ENCODE measurements at regions of chr3 and their contacts with region 1.

Region 1: DNA sequence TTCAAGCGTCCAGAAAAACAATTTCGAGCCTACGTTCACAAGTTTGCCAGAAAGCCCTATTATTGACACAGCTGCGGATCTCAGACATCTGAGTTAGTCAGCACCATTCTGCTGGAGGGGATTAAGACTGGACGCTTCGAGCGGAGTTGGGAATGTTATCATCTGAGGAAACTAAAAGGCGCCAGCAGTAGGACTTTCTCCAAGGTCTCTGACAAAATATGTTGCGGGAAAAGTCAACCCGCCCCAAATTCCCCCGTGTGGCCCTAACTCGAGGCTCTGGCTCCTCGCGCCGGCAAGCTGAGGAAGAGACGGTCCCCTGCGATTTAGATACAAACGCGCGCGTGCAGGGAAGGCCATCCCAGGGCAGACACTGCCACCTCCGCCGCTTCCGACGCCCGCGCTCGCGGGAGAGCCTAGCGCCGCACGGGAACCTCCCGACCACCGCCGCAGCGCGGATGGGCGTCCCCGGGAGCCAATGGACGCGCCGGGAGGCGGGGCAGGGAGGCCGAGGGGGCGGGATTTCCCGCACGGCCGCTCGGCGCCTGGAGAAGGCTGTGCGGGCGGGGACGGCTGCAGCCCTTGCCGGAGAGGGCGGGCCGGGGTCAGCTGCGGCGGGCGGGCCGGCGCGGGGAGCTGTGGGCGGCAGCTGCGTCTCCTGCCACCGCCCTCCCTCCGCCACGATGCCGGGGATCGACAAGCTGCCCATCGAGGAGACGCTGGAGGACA is at the start of gene APPL1:
- DNase-seq: peak; percentile 74 to 95
- H3K4me3 ChIP-seq: peak within 1 kb of the TSS; percentile 72 to 97
- H3K27ac ChIP-seq: peak within 1 kb of the TSS; percentile 76 to 96
- H3K4me1 ChIP-seq: peaks cover 3 to 14% of the 10 kb centered on the region in 2 donors
- H3K27me3 ChIP-seq: no peaks in the 10 kb centered on the region
- CTCF ChIP-seq: no peak
- total RNA-seq, gene APPL1: 63.1 TPM

Region 2: DNA sequence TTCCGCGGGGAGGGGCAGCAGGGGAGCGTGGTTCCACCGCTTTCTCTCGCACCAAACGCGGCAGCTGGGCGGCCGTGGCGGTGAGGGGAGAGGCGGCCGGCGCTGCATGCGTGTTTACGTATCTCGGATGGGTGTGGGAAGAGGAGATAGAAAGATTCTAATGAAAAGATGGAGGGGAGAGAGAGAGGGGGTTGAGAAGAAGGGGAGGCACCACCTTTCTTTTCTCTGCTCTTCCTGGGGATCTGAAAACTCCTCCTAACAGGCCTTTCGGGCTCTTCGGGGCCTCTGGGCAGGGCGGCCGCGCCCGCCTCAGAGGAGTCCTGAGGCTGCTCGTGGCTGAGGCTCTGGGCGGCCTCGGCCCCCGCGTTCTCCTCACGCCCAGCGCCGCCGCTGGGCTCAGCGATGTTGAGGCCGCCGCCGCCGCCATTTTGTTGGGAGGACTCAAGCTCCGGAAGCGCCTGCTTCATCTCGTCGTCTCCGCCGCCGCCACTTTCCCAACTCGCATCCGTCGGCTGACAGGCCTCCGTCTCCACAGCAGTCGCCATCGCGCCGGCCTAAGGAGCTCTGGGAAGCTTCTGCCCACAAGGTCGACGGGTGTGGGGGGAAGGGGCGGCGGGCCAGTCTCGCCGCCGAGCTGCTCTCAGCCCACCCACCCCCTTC is 544.8 kb before region 1 on chr3:
- intact Hi-C with region 1: loop called (anchors 5 kb)
- DNase-seq: peak in 1 of 2 donors; percentile 82
- H3K4me3 ChIP-seq: peak overlapping the region; percentile 74 to 82
- H3K27ac ChIP-seq: peak overlapping the region; percentile 95 to 99
- H3K4me1 ChIP-seq: peaks cover 0 to 3% of the 10 kb centered on the region in 2 donors
- H3K27me3 ChIP-seq: no peaks in the 10 kb centered on the region
- CTCF ChIP-seq: no peak

Region 3: DNA sequence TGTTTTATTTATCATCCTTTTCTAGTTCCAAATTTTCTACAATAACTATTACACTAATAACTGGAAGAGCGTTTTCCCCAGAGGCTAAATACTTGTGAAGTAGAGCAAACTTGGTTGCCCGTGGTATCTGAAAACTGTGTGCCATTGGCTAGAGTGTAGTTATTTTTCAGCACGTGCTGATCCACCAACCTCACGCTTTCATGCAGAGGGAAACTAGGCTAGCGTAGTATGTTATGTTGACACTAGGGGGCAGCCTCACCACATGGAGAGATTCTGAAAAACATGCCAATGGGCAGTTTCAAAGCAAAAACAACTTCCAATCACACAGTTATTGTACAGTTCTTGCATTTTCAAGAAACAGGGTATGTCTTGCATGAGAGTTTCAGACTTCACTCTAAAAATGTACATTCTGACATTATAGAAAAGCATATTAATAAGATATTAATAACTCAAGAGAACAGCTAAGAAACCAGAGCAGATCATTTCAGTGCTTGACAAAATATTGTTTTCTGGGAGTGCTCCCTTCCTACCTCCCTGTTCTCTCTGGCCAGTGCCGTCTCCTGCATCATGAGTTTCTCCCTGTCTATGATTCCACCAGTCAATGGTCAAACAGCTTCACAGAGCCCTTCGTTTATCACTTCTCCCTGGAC is 127.2 kb before region 1 on chr3:
- intact Hi-C with region 1: loop called (anchors 5 kb)
- DNase-seq: peak in 1 of 2 donors; percentile 84
- H3K4me3 ChIP-seq: no peak overlapping the region
- H3K27ac ChIP-seq: no peak overlapping the region
- H3K4me1 ChIP-seq: no peaks in the 10 kb centered on the region
- H3K27me3 ChIP-seq: no peaks in the 10 kb centered on the region
- CTCF ChIP-seq: peak; percentile 68 to 91 (median 83)

Region 4: GRCh38 chr3:57199895-57200297 is 27.5 kb before region 1 on chr3 and contains the start of gene HESX1:
- intact Hi-C with region 1: no loop called
- DNase-seq: no peak
- H3K4me3 ChIP-seq: no peak within 1 kb of the TSS
- H3K27ac ChIP-seq: no peak within 1 kb of the TSS
- H3K4me1 ChIP-seq: no peaks in the 10 kb centered on the region
- H3K27me3 ChIP-seq: no peaks in the 10 kb centered on the region
- CTCF ChIP-seq: no peak
- total RNA-seq, gene HESX1: not detected

Region 5: GRCh38 chr3:57252404-57252803 is 25.0 kb after region 1 on chr3:
- intact Hi-C with region 1: no loop called
- DNase-seq: no peak
- H3K4me3 ChIP-seq: no peak overlapping the region
- H3K27ac ChIP-seq: no peak overlapping the region
- H3K4me1 ChIP-seq: no peaks in the 10 kb centered on the region
- H3K27me3 ChIP-seq: no peaks in the 10 kb centered on the region
- CTCF ChIP-seq: no peak

Region 6: GRCh38 chr3:57555738-57556458 is 328.5 kb after region 1 on chr3 and contains the start of gene PDE12:
- intact Hi-C with region 1: loop called (anchors 2 kb)
- DNase-seq: peak; percentile 49 to 95
- H3K4me3 ChIP-seq: peak within 1 kb of the TSS; percentile 90
- H3K27ac ChIP-seq: peak within 1 kb of the TSS; percentile 88 to 90
- H3K4me1 ChIP-seq: peaks cover 3 to 18% of the 10 kb centered on the region in 2 donors
- H3K27me3 ChIP-seq: no peaks in the 10 kb centered on the region
- CTCF ChIP-seq: no peak
- total RNA-seq, gene PDE12: 3.0 TPM

Region 7: DNA sequence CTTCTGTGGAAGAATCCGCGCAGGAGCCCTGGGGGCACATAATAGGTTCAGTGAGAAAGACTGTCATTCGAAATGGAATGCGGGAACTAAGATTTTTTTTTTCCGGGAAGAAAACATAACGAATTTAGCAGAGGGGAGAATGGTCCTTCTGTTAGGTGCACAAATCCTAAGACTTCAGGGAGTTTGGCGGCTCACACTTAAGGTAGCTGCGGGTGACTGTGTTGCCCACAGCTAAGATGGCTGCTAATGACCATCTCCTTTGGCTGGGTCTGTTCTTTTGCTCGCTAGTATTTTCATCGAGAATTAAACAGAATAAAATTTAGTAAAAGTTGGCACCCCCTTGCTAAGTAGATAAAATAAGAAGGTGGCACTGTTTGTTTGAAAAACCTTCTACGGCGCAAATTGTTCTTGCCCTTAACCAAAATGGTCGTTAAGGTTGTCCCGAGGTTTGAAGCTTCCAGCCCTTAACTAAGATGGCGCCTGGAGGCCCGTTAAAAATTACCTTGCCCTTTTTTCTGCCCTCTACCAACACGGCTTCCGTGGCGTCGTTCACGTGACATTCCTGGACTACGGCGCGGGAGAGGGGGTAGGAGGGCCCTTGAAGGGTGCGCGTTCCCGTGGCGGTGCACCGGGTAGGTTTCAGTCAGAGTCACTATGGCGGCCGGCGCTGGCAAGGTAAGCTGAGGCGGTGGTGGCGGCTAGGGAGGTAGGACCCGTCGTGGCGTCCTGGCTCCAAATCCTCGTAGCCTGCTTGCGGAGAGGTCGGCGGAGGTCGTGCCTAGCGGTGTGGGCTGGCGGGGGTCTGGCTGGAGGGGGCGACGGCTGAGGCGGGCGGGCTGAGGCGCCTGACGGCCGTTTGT is 528.5 kb after region 1 on chr3 and contains the start of gene SLMAP:
- intact Hi-C with region 1: loop called (anchors 2 kb)
- DNase-seq: peak; percentile 92 to 98
- H3K4me3 ChIP-seq: peak within 1 kb of the TSS; percentile 89 to 90
- H3K27ac ChIP-seq: peak within 1 kb of the TSS; percentile 87
- H3K4me1 ChIP-seq: peaks cover 16 to 19% of the 10 kb centered on the region in 2 donors
- H3K27me3 ChIP-seq: no peaks in the 10 kb centered on the region
- CTCF ChIP-seq: no peak
- total RNA-seq, gene SLMAP: 502 TPM

Region 8: DNA sequence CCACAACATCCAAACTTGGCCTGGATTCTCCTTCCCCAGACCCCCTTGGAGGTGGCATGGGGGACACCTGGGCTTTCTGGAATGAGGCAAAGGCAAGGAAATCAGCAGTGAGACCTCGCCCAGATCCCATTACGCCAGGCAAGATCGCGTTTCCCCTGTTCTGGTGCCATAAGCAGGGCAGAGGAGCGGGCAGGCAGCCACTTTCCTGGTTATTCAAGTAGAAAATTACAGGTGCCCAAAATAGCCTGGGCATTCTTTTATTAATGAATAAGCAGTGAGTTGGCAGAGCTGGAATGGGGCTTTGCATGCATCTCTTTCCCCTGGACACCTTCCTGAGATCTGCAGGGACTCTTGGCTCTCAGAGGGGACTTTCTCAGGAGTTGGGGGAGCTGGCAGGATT is 1381.3 kb after region 1 on chr3:
- intact Hi-C with region 1: no loop called
- DNase-seq: no peak
- H3K4me3 ChIP-seq: no peak overlapping the region
- H3K27ac ChIP-seq: no peak overlapping the region
- H3K4me1 ChIP-seq: no peaks in the 10 kb centered on the region
- H3K27me3 ChIP-seq: no peaks in the 10 kb centered on the region
- CTCF ChIP-seq: no peak

Measured in ascending aorta (tissue), 2 donors.